GM10248 (cell line): ENCODE measurements at regions of chr16 and their contacts with region 1.

Region 1: DNA sequence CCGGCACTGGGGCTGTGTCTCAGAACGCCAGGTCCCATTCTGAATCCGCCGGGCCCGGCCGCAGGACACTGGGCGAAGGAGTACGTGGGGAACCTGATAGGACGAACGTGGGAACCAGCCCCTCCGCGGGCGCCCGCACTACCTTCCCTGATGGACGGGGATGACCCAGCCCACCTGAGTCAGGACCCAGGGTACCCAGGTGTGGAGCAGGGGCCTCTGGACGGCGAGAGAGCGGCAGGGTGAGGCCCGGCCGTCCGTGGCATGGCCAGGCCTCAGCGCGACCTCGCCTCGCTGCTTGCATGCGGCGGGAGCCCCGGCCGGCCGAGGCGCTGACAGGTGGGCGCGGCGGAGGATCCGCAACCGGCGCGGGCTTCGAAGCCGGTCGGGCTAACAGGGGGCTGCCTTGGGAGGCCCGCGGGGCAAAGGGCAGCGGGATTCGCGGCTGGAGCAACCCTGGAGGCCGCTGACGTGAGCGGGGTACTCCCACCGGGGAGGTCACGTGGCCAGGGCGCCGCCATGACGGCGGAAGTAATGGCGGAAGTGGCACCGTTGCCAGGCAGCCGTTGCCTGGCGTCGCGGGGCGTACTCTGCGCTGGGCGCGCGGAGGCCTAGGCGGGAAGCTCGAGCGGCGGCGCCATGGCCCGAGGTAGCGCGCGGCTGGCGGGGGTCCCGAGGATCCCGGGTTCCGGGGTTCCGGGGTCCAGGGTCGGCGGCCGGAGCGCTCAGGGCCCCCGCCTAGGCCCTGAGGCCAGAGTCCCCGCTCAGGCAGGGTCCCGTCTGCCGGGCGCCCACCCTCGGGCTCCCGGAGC is at the start of gene WDR90:
- DNase-seq: peak; percentile 96
- CTCF ChIP-seq: no peak

Region 2: DNA sequence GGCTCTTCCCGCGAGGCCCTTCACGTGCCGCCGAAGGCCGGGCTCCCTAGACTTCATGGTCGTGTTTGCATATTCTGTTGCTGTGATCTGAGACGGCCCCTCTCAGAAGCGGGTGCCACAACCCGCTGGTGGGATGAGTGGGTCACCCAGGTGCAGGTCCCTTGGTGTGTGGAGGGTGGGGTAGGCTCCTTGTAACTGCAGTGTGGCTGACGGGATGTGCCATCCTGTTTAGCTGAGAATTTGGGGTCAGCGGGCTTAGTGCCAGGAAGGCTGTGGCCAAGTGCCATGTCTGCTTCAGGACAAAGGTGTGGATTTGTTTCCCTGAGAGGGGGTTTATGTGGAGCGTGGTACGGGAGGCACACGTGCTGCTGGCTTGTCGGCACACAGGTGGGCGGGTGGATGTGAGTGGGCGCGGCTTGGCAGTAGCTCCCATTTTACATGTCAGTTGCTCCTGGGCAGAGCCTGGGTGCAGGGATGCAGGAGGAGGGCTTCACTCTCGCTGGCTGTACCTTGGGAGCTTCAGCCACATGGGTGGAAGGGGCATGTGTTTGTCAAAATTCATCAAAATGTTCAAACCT is 27.4 kb before region 1 on chr16:
- CTCF ChIA-PET with region 1: no interaction called
- POLR2A ChIA-PET with region 1: no interaction called
- DNase-seq: no peak
- CTCF ChIP-seq: no peak

Region 3: GRCh38 chr16:636206-637080 is 12.5 kb before region 1 on chr16 and contains the start of gene METTL26:
- CTCF ChIA-PET with region 1: interaction called, 13 read pairs
- POLR2A ChIA-PET with region 1: interaction called, 4 read pairs
- DNase-seq: peak; percentile 96
- CTCF ChIP-seq: no peak

Region 4: DNA sequence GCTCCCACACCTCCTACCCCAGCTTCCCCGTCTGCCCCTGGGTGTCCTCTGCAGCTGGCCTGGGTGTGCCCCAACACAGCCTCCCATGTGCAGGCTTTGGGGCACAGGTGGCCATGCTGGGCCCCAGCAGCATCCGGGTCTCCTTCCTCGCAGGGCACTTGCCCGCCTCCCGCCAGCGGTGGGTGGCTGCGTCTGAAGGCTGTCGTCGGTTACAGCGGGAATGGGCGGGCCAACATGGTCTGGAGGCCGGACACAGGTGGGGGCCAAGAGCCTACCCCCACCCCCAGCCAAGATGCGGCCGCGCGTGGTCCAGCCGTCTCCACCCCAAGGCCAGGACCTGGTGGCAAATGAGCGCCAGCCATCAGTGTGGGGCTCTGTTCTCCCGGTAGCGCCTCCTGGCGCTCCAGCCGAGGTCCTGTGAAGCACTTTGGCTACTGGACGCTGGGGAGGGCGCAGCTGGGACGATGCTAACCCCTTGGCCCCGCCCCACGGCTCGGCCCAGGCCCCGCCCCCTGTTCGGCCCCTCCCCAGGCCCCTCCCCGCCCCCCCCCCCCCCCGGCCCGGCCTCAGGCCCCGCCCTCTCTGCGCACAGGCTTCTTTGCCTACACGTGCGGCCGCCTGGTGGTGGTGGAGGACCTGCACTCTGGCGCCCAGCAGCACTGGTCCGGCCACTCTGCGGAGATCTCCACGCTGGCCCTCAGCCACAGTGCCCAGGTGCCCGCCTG is 11.6 kb after region 1 on chr16:
- CTCF ChIA-PET with region 1: interaction called, 57 read pairs
- POLR2A ChIA-PET with region 1: interaction called, 3 read pairs
- DNase-seq: peak; percentile 95
- CTCF ChIP-seq: peak; percentile 54

Region 5: GRCh38 chr16:700684-701584 is 51.9 kb after region 1 on chr16:
- CTCF ChIA-PET with region 1: no interaction called
- POLR2A ChIA-PET with region 1: no interaction called
- DNase-seq: peak; percentile 54
- CTCF ChIP-seq: no peak